WTC11 (cell line): ENCODE measurements at regions of chr19 and their contacts with region 1.

Region 1: DNA sequence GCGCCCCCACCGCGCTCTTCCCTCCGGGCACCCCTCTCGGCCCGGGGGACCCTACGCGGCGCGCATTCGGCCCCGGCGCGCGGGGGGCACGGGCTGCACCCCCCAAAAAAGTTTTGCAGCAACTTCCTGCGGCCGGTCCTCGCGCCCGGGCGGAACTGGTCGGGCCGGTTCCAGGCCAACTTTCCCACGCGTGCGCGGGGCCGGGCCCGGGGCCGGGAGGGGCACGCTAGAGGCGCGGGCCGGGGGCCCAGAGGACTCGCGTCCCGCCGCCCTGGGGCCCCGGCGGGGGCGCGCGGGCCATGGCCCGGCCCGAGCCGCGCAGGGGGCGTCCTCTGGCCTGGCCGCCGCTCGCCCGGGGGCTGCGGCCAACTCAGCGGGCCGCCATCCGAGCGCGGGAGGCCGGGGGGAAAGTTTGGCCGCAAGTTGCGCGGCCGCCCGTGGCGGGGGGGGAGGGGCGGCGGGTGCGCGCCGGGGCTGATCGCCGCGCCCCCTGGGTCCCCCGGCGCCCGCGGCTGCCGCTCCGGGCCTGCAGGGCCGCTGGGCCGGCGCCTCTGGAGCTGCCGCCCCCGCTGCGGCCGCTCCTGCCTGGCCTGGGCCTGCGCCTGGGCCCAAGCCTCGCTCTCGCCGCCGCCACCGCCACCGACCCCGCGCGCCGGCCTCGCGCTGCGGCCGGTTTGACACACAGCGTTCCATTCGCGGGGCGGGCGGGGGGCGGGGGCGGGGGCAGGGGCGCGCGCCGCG is at the start of gene NR2F6:
- DNase-seq: no peak
- ATAC-seq: no peak
- H3K4me3 Mint-ChIP-seq: peak within 1 kb of the TSS; percentile 97
- H3K27ac Mint-ChIP-seq: peak within 1 kb of the TSS; percentile 98
- H3K4me1 Mint-ChIP-seq: peaks cover 57% of the 10 kb centered on the region
- H3K27me3 Mint-ChIP-seq: no peaks in the 10 kb centered on the region
- CTCF ChIP-seq: no peak
- total RNA-seq, gene NR2F6: 144 to 149 TPM (median 145 TPM) in 3 replicates

Region 2: GRCh38 chr19:17149393-17150135 is 95.8 kb before region 1 on chr19:
- CTCF ChIA-PET with region 1: no interaction called
- POLR2A ChIA-PET with region 1: no interaction called
- DNase-seq: no peak
- ATAC-seq: no peak
- H3K4me3 Mint-ChIP-seq: no peak overlapping the region
- H3K27ac Mint-ChIP-seq: no peak overlapping the region; the same call in 1 of the 2 replicates
- H3K4me1 Mint-ChIP-seq: no peaks in the 10 kb centered on the region
- H3K27me3 Mint-ChIP-seq: no peaks in the 10 kb centered on the region
- CTCF ChIP-seq: no peak

Region 3: GRCh38 chr19:17226002-17226933 is 19.1 kb before region 1 on chr19 and contains the start of gene OCEL1:
- CTCF ChIA-PET with region 1: interaction called, 11 read pairs
- POLR2A ChIA-PET with region 1: interaction called, 6 read pairs
- DNase-seq: peak; percentile 98
- ATAC-seq: peak; percentile 92
- H3K4me3 Mint-ChIP-seq: peak within 1 kb of the TSS; percentile 89
- H3K27ac Mint-ChIP-seq: peak within 1 kb of the TSS; percentile 100
- H3K4me1 Mint-ChIP-seq: peaks cover 15% of the 10 kb centered on the region
- H3K27me3 Mint-ChIP-seq: peaks cover 2% of the 10 kb centered on the region; the same call in 1 of the 2 replicates
- CTCF ChIP-seq: no peak
- total RNA-seq, gene OCEL1: 34.0 to 51.6 TPM (median 40.9 TPM) in 3 replicates

Region 4: DNA sequence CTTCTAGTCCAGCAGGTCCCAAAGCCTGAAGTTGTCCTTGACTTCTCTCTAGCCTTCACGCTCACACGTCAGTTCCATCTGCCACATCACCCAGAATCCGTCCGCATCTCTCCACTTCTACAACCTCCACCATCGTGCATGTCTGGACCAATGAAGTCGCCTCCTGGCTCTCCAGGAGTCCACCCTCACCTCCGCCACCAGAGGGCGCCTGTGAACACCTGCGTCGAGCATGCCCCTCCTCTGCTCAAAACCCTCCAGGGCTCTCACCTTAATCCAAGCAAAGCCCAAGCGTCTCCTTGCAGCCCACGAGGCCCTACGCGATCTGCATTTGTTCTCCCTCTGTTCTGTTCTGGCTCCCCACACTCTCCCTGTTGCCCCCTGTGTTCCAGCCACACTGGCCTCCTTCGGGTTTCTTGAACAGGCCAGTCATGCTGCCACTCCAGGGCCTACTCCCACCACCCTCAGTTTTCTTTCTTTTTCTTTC is 15.5 kb after region 1 on chr19:
- CTCF ChIA-PET with region 1: interaction called, 38 read pairs
- POLR2A ChIA-PET with region 1: interaction called, 11 read pairs
- DNase-seq: peak; percentile 94
- ATAC-seq: peak; percentile 94
- H3K4me3 Mint-ChIP-seq: no peak overlapping the region
- H3K27ac Mint-ChIP-seq: peak overlapping the region; percentile 33
- H3K4me1 Mint-ChIP-seq: peaks cover 19% of the 10 kb centered on the region
- H3K27me3 Mint-ChIP-seq: peaks cover 7% of the 10 kb centered on the region
- CTCF ChIP-seq: peak; percentile 96

Region 5: GRCh38 chr19:17266975-17267788 is 21.8 kb after region 1 on chr19 and contains the start of gene BABAM1:
- CTCF ChIA-PET with region 1: interaction called, 5 read pairs
- POLR2A ChIA-PET with region 1: interaction called, 11 read pairs
- DNase-seq: peak; percentile 96
- ATAC-seq: peak; percentile 95
- H3K4me3 Mint-ChIP-seq: peak within 1 kb of the TSS; percentile 96
- H3K27ac Mint-ChIP-seq: peak within 1 kb of the TSS; percentile 92
- H3K4me1 Mint-ChIP-seq: peaks cover 20% of the 10 kb centered on the region
- H3K27me3 Mint-ChIP-seq: no peaks in the 10 kb centered on the region
- CTCF ChIP-seq: no peak
- total RNA-seq, gene BABAM1: 139 to 147 TPM (median 146 TPM) in 3 replicates